Cardiac septum (tissue), 1 donor: ENCODE measurements at regions of chr5 and their contacts with region 1.

Region 1: DNA sequence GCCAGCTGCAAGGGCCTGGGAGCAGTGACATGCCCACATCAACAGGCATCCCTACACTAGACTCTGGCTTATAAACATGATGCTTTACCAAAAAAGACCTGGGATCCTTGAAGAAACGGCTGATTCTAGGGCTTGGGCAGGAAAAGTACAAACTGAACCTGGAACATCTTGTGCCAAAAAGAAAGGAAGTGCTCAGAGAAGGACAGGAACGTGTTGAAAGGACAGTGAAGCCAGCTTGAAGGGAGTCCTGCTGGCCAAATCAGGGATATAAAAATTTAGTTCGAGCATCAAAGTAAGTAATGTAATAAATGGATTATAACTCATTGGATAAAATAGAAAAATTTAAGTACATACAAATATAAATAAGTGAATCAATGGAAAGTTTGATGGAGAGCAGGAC is 58.1 kb downstream of the ALDH7A1 start:
- DNase-seq: no peak

Region 2: DNA sequence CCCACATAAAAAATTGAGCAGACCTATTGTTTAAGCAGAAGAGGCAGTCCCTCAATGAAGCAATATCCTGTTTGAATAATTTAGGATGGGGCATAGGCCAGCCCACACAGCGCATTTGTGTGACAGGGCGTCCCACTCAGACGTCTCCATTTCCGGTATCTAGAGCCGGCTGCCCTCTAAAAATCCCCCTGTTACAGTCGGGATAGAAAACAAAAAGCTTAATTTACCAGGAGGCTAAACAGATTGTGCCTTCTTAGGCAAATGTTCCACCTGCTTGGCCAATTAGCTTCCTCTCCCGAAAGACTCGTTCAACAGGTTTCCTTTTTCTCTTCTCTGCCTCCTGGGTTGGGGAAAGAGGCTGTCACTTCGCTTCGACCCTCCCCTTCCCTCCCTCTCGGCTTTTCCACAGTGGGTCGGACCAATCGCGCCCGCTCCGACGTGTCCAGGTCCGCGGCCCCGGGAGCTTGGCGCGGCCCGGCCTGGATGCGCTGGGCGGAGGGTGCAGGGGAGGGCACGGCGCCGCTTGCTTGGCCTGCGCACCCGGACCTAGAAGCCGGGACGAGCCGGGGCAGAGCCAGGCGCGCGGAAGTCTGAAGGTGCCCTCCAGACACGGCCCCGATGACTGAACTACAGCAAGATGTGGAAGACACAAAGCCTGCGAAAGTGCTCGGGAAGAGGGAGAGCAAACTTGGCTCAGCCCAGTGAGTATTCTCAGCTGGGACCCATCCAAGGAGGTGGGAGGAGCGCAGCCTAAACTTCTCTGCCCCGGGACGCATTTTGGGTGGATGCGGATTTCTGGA is 113.7 kb before region 1 on chr5 and contains the start of gene GRAMD2B:
- intact Hi-C with region 1: loop called (anchors 5 kb)
- DNase-seq: peak; percentile 89
- total RNA-seq, gene GRAMD2B: 33.4 TPM

Region 3: GRCh38 chr5:126499853-126500342 is 37.0 kb before region 1 on chr5:
- intact Hi-C with region 1: loop called (anchors 5 kb)
- DNase-seq: no peak

Region 4: DNA sequence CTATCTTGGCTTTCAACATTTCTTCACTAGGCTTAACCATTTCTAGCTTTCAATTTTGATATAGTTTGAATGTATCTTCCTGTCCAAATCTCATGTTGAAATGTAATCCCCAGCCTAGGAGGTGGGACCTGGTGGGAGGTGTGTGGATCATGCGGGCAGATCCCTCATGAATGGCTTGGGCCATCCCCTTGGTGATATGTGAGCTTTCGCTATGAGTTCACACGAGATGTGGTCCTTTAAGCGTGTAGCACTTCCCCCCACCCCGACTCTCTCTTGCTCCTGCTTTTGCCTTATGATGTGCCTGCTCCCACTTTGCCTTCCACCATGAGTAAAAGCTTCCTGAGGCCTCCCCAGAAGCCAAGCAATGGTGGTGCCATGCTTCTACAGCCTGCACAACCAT is 104.5 kb after region 1 on chr5:
- intact Hi-C with region 1: no loop called
- DNase-seq: no peak

Region 5: GRCh38 chr5:127170918-127171600 is 634.2 kb after region 1 on chr5:
- intact Hi-C with region 1: no loop called
- DNase-seq: no peak